Caco-2 (cell line): ENCODE measurements at regions of chrX and their contacts with region 1.

Region 1: GRCh38 chrX:134020910-134021309 is 35.5 kb upstream of the GPC3 start:
- DNase-seq: peak; percentile 43 to 50
- H3K4me3 ChIP-seq: no peak overlapping the region
- H3K4me3 Mint-ChIP-seq: no peak overlapping the region
- H3K27ac Mint-ChIP-seq: no peak overlapping the region
- H3K4me1 ChIP-seq: peaks cover 6% of the 10 kb centered on the region; the same call in 1 of the 2 replicates
- H3K4me1 Mint-ChIP-seq: peaks cover 23% of the 10 kb centered on the region
- H3K27me3 ChIP-seq: no peaks in the 10 kb centered on the region
- H3K27me3 Mint-ChIP-seq: no peaks in the 10 kb centered on the region
- CTCF ChIP-seq: peak in 1 of 2 experiments; percentile 47

Region 2: DNA sequence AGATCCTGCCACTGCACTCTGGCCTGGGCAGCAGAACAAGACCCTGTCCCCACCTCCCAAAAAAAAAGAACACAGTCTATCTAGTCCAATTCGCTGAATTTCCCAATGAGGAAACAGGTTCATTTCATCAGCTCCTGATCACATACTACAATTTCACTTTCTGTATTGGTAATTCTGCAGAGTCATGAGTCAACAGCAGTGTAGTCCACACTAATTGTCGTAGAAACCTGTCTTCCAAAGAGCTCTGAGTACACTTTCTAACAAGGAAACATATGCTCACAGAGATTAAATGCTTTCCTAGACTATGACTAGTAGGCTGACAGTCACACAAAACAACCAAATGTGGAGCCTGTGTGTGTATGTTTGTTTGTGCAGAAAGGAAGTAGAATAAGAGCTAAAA is 697.5 kb before region 1 on chrX:
- CTCF ChIA-PET with region 1: no interaction called
- POLR2A ChIA-PET with region 1: no interaction called
- intact Hi-C with region 1: no loop called
- DNase-seq: no peak
- H3K4me3 ChIP-seq: no peak overlapping the region
- H3K4me3 Mint-ChIP-seq: no peak overlapping the region
- H3K27ac Mint-ChIP-seq: no peak overlapping the region
- H3K4me1 ChIP-seq: no peaks in the 10 kb centered on the region
- H3K4me1 Mint-ChIP-seq: no peaks in the 10 kb centered on the region
- H3K27me3 ChIP-seq: no peaks in the 10 kb centered on the region
- H3K27me3 Mint-ChIP-seq: no peaks in the 10 kb centered on the region
- CTCF ChIP-seq: no peak

Region 3: DNA sequence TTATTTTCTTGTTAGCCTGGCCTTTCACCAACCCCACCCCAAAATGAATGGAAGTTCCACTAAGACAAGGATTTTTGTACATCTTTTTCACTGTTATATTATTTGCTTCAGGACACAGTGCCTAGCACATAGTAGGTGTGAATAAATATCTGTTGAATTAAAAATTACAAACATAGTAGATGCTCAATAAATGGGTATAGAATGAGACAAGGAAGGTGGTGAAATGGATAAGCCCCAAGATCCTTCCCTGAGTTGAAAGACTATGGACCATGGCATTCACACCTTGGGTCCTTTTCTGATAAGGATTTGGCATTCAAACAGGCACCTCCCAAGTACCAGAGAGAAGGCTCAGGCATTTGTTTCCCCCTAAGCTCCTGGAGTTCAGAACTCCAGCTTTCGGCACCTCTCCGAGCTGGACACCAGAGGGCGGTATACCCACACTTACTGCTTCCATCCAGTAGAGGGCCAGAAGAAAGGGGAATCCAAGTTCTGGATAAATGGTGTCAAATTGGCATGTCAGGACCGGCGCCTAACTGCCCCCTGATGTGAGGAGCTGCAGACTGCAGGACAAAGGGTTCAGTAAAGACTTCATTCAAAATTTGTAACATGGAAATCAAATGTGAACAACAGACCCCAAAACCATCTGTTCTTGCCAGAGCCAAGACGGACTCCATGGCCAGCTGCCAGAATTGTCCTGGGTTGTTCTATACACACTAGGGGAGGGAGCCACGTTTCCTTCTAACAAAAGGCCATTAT is 228.5 kb before region 1 on chrX:
- CTCF ChIA-PET with region 1: interaction called, 19 read pairs
- POLR2A ChIA-PET with region 1: no interaction called
- intact Hi-C with region 1: loop called (anchors 1 kb)
- DNase-seq: peak; percentile 54 to 68
- H3K4me3 ChIP-seq: no peak overlapping the region
- H3K4me3 Mint-ChIP-seq: no peak overlapping the region
- H3K27ac Mint-ChIP-seq: no peak overlapping the region
- H3K4me1 ChIP-seq: no peaks in the 10 kb centered on the region
- H3K4me1 Mint-ChIP-seq: peaks cover 6% of the 10 kb centered on the region
- H3K27me3 ChIP-seq: no peaks in the 10 kb centered on the region
- H3K27me3 Mint-ChIP-seq: no peaks in the 10 kb centered on the region
- CTCF ChIP-seq: peak; percentile 96 to 98

Region 4: GRCh38 chrX:133897593-133898163 is 123.2 kb before region 1 on chrX:
- CTCF ChIA-PET with region 1: no interaction called
- POLR2A ChIA-PET with region 1: no interaction called
- intact Hi-C with region 1: no loop called
- DNase-seq: no peak
- H3K4me3 ChIP-seq: no peak overlapping the region
- H3K4me3 Mint-ChIP-seq: no peak overlapping the region
- H3K27ac Mint-ChIP-seq: no peak overlapping the region
- H3K4me1 ChIP-seq: peaks cover 5% of the 10 kb centered on the region
- H3K4me1 Mint-ChIP-seq: no peaks in the 10 kb centered on the region
- H3K27me3 ChIP-seq: no peaks in the 10 kb centered on the region
- H3K27me3 Mint-ChIP-seq: no peaks in the 10 kb centered on the region
- CTCF ChIP-seq: no peak

Region 5: DNA sequence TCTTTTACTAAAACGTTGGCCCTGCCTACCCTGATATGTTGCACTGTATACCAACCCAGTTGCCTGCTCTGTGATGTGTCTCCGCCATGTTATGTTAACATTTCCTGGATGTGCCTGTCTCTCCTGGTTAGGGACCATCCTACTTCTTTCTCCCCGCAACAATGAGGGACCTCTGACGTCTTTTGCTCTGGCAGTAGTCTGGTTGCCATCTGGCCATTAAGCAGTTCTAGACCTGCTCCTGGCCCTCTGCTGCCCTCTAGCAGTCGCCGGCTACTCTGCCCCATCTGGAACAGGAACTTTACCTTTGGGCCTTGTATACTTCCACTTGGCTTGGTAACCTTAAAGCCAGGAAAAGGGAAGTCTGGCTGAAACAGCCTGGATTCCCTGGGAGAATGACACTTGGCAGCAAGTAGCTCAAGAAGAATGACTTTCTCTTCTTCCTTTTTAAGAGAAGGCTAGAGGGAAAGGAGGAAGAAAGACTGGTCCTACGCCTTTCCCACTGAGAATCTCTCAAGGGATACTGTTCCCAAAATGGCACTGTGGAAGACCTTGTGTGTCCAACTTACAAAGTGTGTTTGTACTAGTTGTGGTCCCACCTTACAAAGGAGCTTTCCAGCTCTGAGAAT is 99.0 kb before region 1 on chrX:
- CTCF ChIA-PET with region 1: interaction called, 4 read pairs
- POLR2A ChIA-PET with region 1: no interaction called
- intact Hi-C with region 1: loop called (anchors 1 kb)
- DNase-seq: peak; percentile 59 to 63
- H3K4me3 ChIP-seq: no peak overlapping the region
- H3K4me3 Mint-ChIP-seq: no peak overlapping the region
- H3K27ac Mint-ChIP-seq: no peak overlapping the region
- H3K4me1 ChIP-seq: 0 out of 2 replicates have a peak, but pooled peaks cover 4% of the 10 kb centered on the region
- H3K4me1 Mint-ChIP-seq: peaks cover 6% of the 10 kb centered on the region
- H3K27me3 ChIP-seq: no peaks in the 10 kb centered on the region
- H3K27me3 Mint-ChIP-seq: no peaks in the 10 kb centered on the region
- CTCF ChIP-seq: peak; percentile 35 to 59

Region 6: GRCh38 chrX:133947996-133948395 is 72.9 kb before region 1 on chrX:
- CTCF ChIA-PET with region 1: no interaction called
- POLR2A ChIA-PET with region 1: no interaction called
- intact Hi-C with region 1: no loop called
- DNase-seq: no peak
- H3K4me3 ChIP-seq: no peak overlapping the region
- H3K4me3 Mint-ChIP-seq: no peak overlapping the region
- H3K27ac Mint-ChIP-seq: no peak overlapping the region
- H3K4me1 ChIP-seq: no peaks in the 10 kb centered on the region
- H3K4me1 Mint-ChIP-seq: no peaks in the 10 kb centered on the region
- H3K27me3 ChIP-seq: no peaks in the 10 kb centered on the region
- H3K27me3 Mint-ChIP-seq: no peaks in the 10 kb centered on the region
- CTCF ChIP-seq: no peak

Region 7: DNA sequence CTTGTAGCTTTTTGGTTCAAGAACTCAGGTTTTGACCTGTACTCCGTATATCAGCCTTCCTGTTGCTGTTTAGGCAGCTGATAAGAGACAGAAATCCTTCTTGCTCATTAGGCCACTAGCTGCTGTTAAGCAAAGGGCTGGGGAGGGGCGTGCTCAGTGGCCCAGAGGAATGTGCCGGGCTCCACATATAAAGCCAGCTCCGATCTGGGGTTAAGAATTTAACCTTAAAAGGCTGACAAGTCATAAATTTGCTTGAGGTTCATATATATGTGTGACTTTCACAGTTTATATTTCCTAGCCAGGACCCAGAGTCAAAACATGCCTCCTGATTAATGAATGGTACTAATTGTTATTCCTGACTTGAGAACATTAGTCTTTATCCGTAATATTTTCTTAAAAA is 50.8 kb before region 1 on chrX:
- CTCF ChIA-PET with region 1: interaction called, 10 read pairs
- POLR2A ChIA-PET with region 1: no interaction called
- intact Hi-C with region 1: loop called (anchors 1 kb)
- DNase-seq: peak; percentile 73 to 83
- H3K4me3 ChIP-seq: no peak overlapping the region
- H3K4me3 Mint-ChIP-seq: peak overlapping the region; percentile 56
- H3K27ac Mint-ChIP-seq: peak overlapping the region; percentile 43
- H3K4me1 ChIP-seq: peaks cover 36% of the 10 kb centered on the region
- H3K4me1 Mint-ChIP-seq: peaks cover 35% of the 10 kb centered on the region
- H3K27me3 ChIP-seq: no peaks in the 10 kb centered on the region
- H3K27me3 Mint-ChIP-seq: no peaks in the 10 kb centered on the region
- CTCF ChIP-seq: no peak

Region 8: GRCh38 chrX:134006484-134007161 is 14.3 kb before region 1 on chrX:
- CTCF ChIA-PET with region 1: no interaction called
- POLR2A ChIA-PET with region 1: no interaction called
- intact Hi-C with region 1: loop called (anchors 2 kb)
- DNase-seq: peak in 1 of 2 experiments; percentile 40
- H3K4me3 ChIP-seq: no peak overlapping the region
- H3K4me3 Mint-ChIP-seq: peak overlapping the region; percentile 33
- H3K27ac Mint-ChIP-seq: peak overlapping the region; percentile 55
- H3K4me1 ChIP-seq: peaks cover 43% of the 10 kb centered on the region
- H3K4me1 Mint-ChIP-seq: peaks cover 39% of the 10 kb centered on the region
- H3K27me3 ChIP-seq: no peaks in the 10 kb centered on the region
- H3K27me3 Mint-ChIP-seq: no peaks in the 10 kb centered on the region
- CTCF ChIP-seq: no peak